Pancreas (tissue), 10 donors: ENCODE measurements at regions of chr12 and their contacts with region 1.

Region 1: GRCh38 chr12:115507951-115508722 is 769.4 kb downstream of the MED13L start:
- DNase-seq: no peak
- ATAC-seq: peak in 1 of 4 donors; percentile 47
- H3K4me3 ChIP-seq: no peak overlapping the region
- H3K27ac ChIP-seq: no peak overlapping the region
- H3K4me1 ChIP-seq: no peaks in the 10 kb centered on the region
- H3K27me3 ChIP-seq: no peaks in the 10 kb centered on the region
- CTCF ChIP-seq: no peak

Region 2: DNA sequence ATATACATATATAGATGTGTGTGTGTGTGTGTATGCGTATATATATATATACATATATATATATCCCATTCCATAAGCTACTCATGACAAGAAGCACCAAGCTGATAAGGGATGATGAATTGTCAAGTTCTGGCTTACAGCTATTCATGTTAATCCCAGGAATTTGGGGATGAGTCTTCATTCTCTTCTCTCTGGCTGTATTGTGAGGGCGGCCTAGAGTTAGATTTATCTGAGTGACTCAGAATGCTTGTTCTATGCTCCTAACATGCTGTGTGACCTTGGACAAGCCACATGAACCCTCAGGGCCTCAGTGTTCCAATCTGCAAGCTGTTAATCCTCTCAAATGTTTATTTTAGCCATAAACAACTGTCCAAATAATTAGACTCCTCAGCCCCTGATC is 20.3 kb after region 1 on chr12:
- intact Hi-C with region 1: loop called in 1 of 3 experiments (anchors 2 kb)
- DNase-seq: no peak
- ATAC-seq: no peak
- H3K4me3 ChIP-seq: no peak overlapping the region
- H3K27ac ChIP-seq: no peak overlapping the region
- H3K4me1 ChIP-seq: no peaks in the 10 kb centered on the region
- H3K27me3 ChIP-seq: no peaks in the 10 kb centered on the region
- CTCF ChIP-seq: no peak